Activated T-helper 1 cell treated with anti-CD3 and anti-CD28 coated beads, Interleukin-12 subunit alpha, Interleukin-12 subunit beta, Interleukin-2, Interleukin-4 antibody, amounts not matched to agents 30 ng/mL and 10 ng/mL and 1 ng/mL, durations not matched to agents 14 hours and 24 hours and 36 hours (primary cell): ENCODE measurements at regions of chr6 and their contacts with region 1.

Region 1: GRCh38 chr6:32177788-32178546 is at the start of gene RNF5:
- DNase-seq: peak; percentile 91
- H3K4me3 Mint-ChIP-seq: peak within 1 kb of the TSS; percentile 95
- H3K27ac Mint-ChIP-seq: peak within 1 kb of the TSS; percentile 94
- H3K4me1 Mint-ChIP-seq: peaks cover 60% of the 10 kb centered on the region
- H3K27me3 Mint-ChIP-seq: no peaks in the 10 kb centered on the region
- total RNA-seq, gene RNF5: 58.1 and 60.4 TPM in 2 replicates

Region 2: DNA sequence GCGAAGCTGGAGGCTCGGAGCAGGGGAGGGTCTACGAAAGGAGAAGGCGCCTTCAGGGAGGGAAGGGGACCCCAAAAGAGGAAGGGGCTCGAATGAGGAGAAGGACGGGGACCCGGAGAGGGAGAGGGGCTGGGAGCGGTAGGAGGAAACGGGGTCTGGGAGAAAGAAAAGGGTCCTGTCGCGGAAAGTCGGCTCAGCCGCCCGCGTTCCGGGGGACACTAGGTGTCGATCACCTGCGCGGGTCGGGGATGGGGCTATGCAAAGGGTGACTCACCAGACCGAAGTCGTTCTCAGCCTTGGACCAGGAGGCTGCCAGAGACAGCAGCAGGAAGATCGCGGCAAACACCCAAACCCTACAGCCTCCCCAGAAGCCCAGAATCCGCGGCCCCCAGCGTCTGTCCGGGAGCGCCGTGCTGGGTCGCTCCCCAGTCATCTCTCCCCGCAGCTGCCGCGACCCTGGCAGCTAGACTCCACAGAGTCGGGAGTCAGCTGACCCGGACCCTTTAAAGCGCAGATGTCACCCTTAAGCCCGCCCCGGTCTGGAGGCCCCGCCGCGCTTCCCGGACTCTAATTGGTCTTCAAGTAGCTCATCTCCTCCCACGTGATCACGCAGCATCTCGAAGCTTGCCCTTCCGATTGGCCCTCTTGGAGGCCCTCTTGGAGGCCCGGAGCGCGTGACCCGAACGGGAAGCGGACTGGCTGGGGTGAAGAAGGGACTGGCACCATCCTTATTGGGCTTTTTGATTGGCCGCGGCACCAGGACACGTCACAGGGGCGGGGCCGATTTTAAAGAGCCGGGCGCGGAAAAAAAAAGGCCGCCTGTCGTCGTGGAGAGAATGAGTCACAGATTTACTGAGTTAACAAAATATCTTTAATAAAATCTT is 315.4 kb before region 1 on chr6 and contains the start of gene NEU1:
- intact Hi-C with region 1: loop called (anchors 2 kb)
- DNase-seq: peak; percentile 99
- H3K4me3 Mint-ChIP-seq: peak within 1 kb of the TSS; percentile 97
- H3K27ac Mint-ChIP-seq: peak within 1 kb of the TSS; percentile 94
- H3K4me1 Mint-ChIP-seq: peaks cover 37% of the 10 kb centered on the region
- H3K27me3 Mint-ChIP-seq: peaks cover 3% of the 10 kb centered on the region
- total RNA-seq, gene NEU1: 22.1 and 24.3 TPM in 2 replicates

Region 3: DNA sequence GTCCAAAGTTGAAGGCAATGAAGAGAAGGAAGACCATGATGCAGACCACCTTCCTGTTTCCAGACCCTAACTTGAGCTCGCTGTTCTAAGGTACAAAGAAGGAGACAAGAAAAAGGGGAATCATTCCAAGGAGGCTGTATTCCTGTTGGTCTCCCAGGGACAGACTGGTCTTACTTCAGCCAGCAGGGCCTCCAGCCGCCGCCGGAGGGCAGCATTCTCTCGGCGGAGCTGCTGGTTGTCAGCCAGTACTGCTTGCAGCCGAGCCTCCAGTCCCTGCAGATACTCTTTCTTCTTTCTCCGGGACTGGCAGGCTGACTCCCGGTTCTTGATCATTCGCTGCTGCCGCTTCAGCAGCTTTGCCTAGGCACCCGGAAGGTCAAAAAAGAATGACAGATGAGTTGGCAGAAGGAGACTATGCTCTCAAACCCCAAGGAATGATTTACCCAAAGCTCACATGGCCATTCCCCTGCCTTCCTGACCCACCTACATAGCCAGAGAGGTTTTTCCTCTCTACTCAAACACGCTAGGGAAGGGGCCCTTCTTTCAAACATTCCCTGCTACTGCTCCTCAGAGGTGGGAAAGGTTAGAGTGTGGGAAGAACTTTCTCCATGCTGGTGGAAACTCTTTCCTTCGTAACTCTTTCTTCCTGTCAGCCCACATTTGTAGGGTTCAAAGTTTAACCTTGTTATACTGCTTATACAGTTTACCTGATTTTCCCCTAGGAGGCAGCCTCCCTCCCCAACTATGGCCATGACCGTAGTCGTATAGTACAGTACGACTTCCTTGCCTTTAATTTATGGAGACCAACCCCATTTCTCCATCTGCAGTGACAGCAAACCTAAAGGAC is 59.0 kb before region 1 on chr6:
- intact Hi-C with region 1: loop called (anchors 2 kb)
- DNase-seq: peak; percentile 62
- H3K4me3 Mint-ChIP-seq: no peak overlapping the region
- H3K27ac Mint-ChIP-seq: no peak overlapping the region
- H3K4me1 Mint-ChIP-seq: peaks cover 11% of the 10 kb centered on the region
- H3K27me3 Mint-ChIP-seq: no peaks in the 10 kb centered on the region

Region 4: DNA sequence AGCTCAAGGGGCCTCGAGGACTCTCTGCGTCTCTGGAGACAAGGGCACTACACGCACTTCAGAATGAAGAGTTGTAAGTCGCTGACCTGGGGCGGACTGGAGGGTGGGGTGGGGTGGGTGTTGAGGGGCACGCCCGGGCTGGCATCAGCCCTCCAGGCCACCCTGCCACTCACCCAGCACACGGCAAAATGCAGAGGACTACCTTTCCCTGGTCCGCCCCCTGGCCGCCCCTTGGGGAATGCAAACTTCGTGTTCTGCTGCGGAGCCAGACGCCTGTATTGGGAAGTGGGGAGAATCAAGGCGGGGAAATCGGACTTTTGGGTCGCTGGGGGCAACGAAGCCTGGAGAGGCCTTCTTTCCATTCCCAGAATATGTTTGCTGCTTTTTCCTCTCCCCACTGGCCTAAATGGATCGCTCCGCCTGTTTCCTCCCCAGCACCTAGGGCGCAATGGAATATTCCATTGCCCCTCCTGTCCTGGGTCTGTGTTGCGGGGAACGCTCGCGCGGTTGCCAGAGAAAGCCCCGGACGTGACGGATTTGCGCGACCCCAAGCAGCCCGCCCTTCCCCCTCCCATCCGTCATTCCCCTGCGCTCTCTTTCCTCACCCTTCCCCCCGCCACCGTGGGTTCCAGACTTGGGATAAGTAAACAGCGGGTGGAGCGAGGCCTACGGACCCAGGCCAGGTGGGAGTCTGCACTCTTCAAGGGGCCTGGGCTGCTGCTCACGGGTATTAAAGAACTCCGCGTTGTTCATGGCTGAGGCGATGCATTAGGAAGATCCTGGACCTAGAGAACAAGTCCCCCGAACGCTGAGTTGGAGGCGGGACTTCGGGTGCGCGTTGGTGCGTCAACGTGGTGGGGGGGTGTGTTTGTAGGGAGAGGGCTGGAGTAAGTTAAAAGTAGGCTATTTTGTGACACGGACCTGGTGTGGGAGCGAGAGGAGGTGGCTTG is 24.1 kb before region 1 on chr6 and contains the start of gene PPT2:
- intact Hi-C with region 1: loop called (anchors 1 kb)
- DNase-seq: peak; percentile 55
- H3K4me3 Mint-ChIP-seq: peak within 1 kb of the TSS; percentile 99
- H3K27ac Mint-ChIP-seq: peak within 1 kb of the TSS; percentile 86
- H3K4me1 Mint-ChIP-seq: peaks cover 40% of the 10 kb centered on the region
- H3K27me3 Mint-ChIP-seq: peaks cover 36% of the 10 kb centered on the region
- total RNA-seq, gene PPT2: 12.4 and 17.1 TPM in 2 replicates

Region 5: GRCh38 chr6:32853541-32854375 is 675.8 kb after region 1 on chr6 and contains the starts of genes PSMB9 and TAP1:
- intact Hi-C with region 1: loop called (anchors 5 kb)
- DNase-seq: peak; percentile 92
- H3K4me3 Mint-ChIP-seq: peak within 1 kb of the TSS; percentile 98
- H3K27ac Mint-ChIP-seq: peak within 1 kb of the TSS; percentile 99
- H3K4me1 Mint-ChIP-seq: peaks cover 71% of the 10 kb centered on the region
- H3K27me3 Mint-ChIP-seq: no peaks in the 10 kb centered on the region
- total RNA-seq, gene PSMB9: 249 and 253 TPM in 2 replicates
- total RNA-seq, gene TAP1: 284 and 290 TPM in 2 replicates